ENCODE measurements at regions of chr1 and their contacts with region 1.

Region 1: DNA sequence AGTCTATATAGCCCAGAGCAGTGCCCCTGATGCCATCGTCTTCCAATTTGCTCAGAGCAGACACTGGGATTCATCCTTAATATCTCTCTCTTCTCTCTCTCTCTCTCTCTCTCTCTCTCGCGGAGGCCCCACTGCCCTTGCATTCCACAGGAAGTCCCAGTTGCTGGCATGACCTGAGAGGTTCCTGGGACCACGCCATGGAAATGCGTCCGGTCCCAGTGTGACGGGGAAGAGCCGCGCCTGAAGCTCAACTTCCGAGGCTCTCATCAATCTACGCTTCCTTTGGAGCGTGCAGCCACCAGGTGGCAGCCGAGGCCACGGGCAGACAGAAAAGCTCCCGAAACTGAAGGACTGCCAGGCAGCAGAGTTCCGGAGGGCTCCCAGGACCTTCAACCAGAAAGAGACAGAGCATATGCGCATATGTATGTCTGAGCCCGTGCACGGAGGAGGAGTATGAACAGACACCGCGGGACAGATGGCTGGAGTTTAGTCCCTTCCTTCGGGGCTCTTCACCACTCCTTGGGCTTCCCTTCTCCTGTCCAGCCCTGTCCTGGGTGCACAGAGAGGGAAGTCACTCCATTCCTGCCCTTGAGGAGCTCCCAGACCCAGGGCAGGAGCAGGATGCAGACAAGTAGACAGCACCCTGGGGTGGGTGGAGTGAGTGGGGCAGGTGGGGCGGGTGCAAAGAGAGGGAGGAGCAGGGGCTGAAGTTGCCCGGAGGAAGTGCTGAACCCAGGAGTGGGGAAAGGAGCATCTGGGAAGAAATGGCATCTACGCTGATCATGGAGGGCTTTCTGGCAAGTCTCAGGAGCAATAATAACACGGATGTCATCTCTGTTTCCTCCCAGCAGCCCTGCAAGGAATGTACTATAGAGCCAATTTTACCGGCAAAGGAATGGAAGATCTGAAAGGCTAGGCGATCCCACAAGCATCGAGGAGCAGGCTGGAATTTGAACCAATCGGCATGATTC is 10.5 kb downstream of the PDZK1IP1 start:
- DNase-seq: peak; percentile 14 to 81 (median 56)
- ATAC-seq: peak; percentile 76
- H3K4me3 ChIP-seq: peak overlapping the region; percentile 57
- H3K4me3 Mint-ChIP-seq: peak overlapping the region; percentile 68 to 88 (median 82)
- H3K27ac ChIP-seq: no peak overlapping the region
- H3K27ac Mint-ChIP-seq: peak overlapping the region in 3 of 9 donors; percentile 3 to 89 (median 60)
- H3K4me1 ChIP-seq: peaks cover 4 to 7% of the 10 kb centered on the region in 2 donors
- H3K4me1 Mint-ChIP-seq: peaks cover 9 to 22% (median 15%) of the 10 kb centered on the region in 7 donors
- H3K27me3 ChIP-seq: peaks cover 3 to 8% of the 10 kb centered on the region in 2 donors
- H3K27me3 Mint-ChIP-seq: peaks cover 26 to 55% (median 46%) of the 10 kb centered on the region in 5 donors

Region 2: DNA sequence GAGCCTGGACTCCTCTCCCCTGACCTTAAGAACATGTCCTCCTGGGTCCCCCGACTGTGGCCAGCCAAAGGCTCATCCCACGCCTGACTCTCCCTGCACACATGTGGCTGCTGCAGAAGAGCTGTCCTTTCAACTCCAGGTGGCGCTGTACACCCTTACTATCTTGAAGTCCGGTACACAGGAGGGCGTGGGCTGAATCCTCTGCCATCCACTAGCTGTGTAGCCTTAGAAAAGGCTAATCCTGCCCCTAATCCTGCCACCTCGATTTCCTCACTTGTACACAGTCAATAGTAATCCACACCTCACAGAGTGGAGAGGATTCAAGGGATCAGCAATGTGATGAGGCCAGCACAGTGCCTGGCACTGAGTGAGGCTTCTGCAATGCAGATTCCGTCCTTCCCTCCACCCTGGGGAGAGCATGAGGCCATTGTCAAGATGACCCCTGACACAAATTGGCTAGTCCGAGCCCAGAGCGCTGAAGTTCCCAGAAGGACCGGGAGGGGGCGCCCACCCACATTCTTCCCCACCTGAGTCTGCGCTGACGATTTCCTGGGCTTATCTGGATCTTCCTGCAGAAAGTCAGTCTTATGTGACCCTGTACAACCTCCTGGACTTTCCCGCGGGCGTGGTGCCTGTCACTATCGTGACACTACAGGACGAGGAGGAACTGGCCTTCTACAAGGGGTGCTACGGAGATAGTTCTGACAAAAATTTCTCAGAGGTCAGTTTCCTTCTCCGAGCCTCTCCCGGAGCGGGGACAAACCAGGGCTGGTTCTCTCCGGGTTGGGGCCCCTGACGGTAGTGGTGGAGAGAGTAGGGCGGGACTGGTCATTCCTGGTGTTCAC is 736.8 kb before region 1 on chr1:
- CTCF ChIA-PET with region 1: no interaction called
- POLR2A ChIA-PET with region 1: no interaction called
- intact Hi-C with region 1: loop called in 1 of 2 experiments (anchors 10 kb)
- DNase-seq: peak; percentile 39 to 75 (median 63)
- ATAC-seq: peak; percentile 79
- H3K4me3 ChIP-seq: peak overlapping the region; percentile 75
- H3K4me3 Mint-ChIP-seq: peak overlapping the region; percentile 77 to 95 (median 89)
- H3K27ac ChIP-seq: no peak overlapping the region
- H3K27ac Mint-ChIP-seq: peak overlapping the region in 1 of 9 donors; percentile 47
- H3K4me1 ChIP-seq: peaks cover 0 to 1% of the 10 kb centered on the region in 2 donors
- H3K4me1 Mint-ChIP-seq: peaks cover 13 to 20% (median 14%) of the 10 kb centered on the region in 7 donors
- H3K27me3 ChIP-seq: peaks cover 0 to 5% of the 10 kb centered on the region in 2 donors
- H3K27me3 Mint-ChIP-seq: peaks cover 8 to 45% (median 20%) of the 10 kb centered on the region in 5 donors

Region 3: DNA sequence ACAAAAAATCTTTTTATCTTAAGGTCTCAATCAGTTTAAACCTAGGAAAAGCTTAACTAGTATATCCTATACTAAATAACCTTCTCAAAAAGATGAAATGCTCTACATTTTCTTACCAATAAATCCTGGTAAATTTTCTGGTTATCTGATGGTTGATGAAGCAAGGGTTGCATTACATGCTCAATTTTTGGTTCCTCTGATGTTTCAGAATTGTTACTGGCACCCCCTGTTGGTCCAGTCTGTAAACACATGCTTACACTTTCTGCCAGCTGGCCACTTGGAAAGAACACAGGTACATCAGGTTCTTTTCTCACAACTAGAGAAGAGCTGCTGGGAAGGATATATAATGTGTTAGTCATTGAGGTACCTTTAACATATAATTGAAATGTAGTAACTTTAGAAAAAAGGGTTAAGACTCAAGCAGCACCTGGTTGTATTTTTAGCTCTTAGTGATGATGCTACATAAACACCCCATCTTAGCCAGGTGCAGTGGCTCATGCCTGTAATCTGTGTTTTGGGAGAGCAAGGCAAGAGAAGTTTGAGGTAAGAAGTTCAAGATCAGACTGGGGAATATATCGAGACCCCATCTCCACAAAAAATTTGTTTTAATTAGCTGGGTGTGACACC is 83.6 kb after region 1 on chr1:
- CTCF ChIA-PET with region 1: interaction called, 4 read pairs
- POLR2A ChIA-PET with region 1: no interaction called
- intact Hi-C with region 1: loop called (anchors 5 kb)
- DNase-seq: peak in 6 of 9 donors; percentile 5 to 26 (median 16)
- ATAC-seq: peak; percentile 60
- H3K4me3 ChIP-seq: no peak overlapping the region
- H3K4me3 Mint-ChIP-seq: no peak overlapping the region
- H3K27ac ChIP-seq: no peak overlapping the region
- H3K27ac Mint-ChIP-seq: no peak overlapping the region
- H3K4me1 ChIP-seq: no peaks in the 10 kb centered on the region
- H3K4me1 Mint-ChIP-seq: no peaks in the 10 kb centered on the region
- H3K27me3 ChIP-seq: no peaks in the 10 kb centered on the region
- H3K27me3 Mint-ChIP-seq: no peaks in the 10 kb centered on the region

Region 4: DNA sequence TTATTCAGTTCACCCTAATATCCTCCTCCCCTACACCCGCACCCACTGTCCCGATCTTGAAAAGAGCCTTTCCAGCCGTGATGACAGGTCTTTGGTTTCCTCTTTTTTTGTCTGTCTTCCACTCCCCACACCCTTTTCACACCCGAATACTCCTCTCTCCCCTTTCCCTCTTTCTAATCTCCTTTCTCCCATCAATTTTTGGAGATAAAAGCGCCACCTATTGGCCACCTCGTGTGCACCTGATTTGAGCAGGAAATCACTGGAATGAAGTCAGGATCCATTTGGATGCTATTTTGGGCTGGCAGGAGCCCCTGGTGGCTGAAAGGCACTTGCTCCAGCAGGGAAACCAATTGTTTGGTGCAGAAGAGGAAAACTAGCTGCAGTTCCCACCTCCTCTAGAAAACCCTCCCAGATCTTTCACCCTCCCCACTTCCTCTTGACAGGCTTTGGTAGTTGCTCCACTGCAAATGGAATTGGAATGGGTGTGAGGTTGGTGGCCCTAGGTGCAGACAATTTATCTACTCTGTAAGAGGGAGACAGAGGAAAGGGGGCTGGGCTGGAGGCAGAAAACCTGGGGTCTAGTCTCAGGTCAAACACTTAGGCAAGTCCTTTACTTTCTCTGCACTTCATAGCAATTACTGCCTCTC is 245.2 kb after region 1 on chr1:
- CTCF ChIA-PET with region 1: no interaction called
- POLR2A ChIA-PET with region 1: no interaction called
- intact Hi-C with region 1: loop called in 1 of 2 experiments (anchors 1 kb)
- DNase-seq: no peak
- ATAC-seq: no peak
- H3K4me3 ChIP-seq: no peak overlapping the region
- H3K4me3 Mint-ChIP-seq: no peak overlapping the region
- H3K27ac ChIP-seq: no peak overlapping the region
- H3K27ac Mint-ChIP-seq: no peak overlapping the region
- H3K4me1 ChIP-seq: no peaks in the 10 kb centered on the region
- H3K4me1 Mint-ChIP-seq: peaks cover 0 to 4% (median 0%) of the 10 kb centered on the region in 7 donors
- H3K27me3 ChIP-seq: peaks cover 0 to 4% of the 10 kb centered on the region in 2 donors
- H3K27me3 Mint-ChIP-seq: peaks cover 38 to 44% (median 42%) of the 10 kb centered on the region in 5 donors

Region 5: DNA sequence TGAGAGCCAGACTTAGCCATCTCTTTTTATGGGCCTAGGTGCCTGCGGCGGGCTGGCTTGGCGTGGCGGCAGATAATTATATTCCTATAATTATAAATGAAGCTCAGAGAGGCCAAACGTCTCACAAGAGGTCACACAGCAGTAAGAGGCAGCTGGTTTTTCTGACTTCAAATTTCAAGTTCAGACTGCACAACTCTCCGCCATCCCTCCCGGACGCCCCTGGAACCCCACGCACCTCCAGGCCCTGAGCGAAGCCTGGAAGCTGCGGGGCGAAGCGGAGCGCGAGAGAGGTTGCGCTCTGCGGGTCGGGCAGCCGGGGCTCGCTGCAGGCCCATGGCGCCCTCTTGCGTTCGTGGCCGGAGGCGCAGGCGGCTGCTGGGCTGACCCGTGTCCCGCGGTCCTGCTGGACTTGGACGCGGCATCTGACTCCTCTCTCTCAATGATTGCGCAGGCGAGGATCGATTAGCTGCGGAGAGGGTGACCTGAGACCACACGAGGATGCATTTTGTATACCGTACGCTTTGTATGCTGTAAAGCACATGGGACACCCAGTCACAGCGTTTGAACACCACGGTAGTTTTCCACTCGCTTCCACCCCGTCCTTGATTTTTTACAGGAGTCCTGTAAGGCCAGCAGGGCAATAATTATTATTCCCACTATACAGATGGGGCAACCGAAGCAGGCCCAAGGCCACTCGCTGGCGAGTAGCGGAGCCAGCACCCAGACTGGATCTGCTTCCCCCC is 531.2 kb after region 1 on chr1:
- CTCF ChIA-PET with region 1: no interaction called
- POLR2A ChIA-PET with region 1: no interaction called
- intact Hi-C with region 1: loop called in 1 of 2 experiments (anchors 1 kb)
- DNase-seq: peak; percentile 20 to 83 (median 57)
- ATAC-seq: peak; percentile 83
- H3K4me3 ChIP-seq: peak overlapping the region; percentile 20
- H3K4me3 Mint-ChIP-seq: peak overlapping the region in 7 of 10 donors; percentile 3 to 75 (median 57)
- H3K27ac ChIP-seq: no peak overlapping the region
- H3K27ac Mint-ChIP-seq: no peak overlapping the region
- H3K4me1 ChIP-seq: peaks cover 8 to 10% of the 10 kb centered on the region in 2 donors
- H3K4me1 Mint-ChIP-seq: peaks cover 0 to 12% (median 5%) of the 10 kb centered on the region in 7 donors
- H3K27me3 ChIP-seq: peaks cover 5 to 20% of the 10 kb centered on the region in 2 donors
- H3K27me3 Mint-ChIP-seq: peaks cover 54 to 82% (median 68%) of the 10 kb centered on the region in 5 donors

Measured in naive thymus-derived CD4-positive, alpha-beta T cell (primary cell).